Activated CD4-positive, alpha-beta T cell treated with anti-CD3 and anti-CD28 coated beads, Interleukin-2, amount 10 ng/mL, durations not matched to agents 24 days and 14 days (primary cell): ENCODE measurements at regions of chr7 and their contacts with region 1.

Region 1: GRCh38 chr7:114048386-114049240 is 129.8 kb upstream of the PPP1R3A start:
- DNase-seq: peak; percentile 59
- H3K4me3 Mint-ChIP-seq: peak overlapping the region; percentile 65
- H3K27ac Mint-ChIP-seq: peak overlapping the region; percentile 14
- H3K4me1 Mint-ChIP-seq: peaks cover 6% of the 10 kb centered on the region
- H3K27me3 Mint-ChIP-seq: no peaks in the 10 kb centered on the region

Region 2: GRCh38 chr7:114269714-114270113 is 221.1 kb after region 1 on chr7:
- intact Hi-C with region 1: loop called (anchors 5 kb)
- DNase-seq: no peak
- H3K4me3 Mint-ChIP-seq: no peak overlapping the region
- H3K27ac Mint-ChIP-seq: no peak overlapping the region
- H3K4me1 Mint-ChIP-seq: no peaks in the 10 kb centered on the region
- H3K27me3 Mint-ChIP-seq: no peaks in the 10 kb centered on the region